HepG2 (cell line): ENCODE measurements at regions of chr11 and their contacts with region 1.

Region 1: DNA sequence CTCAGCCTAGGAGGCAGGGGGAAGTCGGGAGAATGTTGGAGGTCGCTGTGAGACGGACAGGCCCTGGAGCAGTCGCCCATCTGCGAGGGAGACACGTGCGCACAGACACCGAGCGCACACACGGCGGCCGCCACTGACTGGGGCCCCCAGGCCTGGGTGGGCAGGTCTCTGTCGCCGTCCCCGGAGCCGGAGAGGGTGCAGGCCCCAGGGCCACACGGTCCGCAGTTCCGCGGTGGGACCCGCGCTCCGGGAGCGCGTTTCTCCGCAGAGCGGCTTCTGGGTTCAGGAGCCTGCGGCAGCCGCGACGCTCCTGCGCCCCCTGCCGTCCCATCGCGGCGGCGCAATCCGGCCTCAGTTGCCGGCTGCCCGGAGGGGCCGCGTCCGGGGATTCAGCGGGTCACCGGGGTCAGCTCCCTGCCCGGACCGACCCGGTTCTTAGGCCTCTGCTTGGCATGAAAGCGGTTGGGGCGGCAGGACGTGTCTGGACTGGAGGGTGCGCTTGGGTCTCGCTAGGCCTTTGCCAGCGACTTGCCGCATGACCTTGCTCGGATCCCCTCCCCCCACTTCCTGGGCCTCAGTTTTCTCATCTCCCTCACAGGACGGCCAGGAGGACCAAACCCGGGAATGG is 31.2 kb downstream of the PDE2A start:
- DNase-seq: no peak
- ATAC-seq: peak; percentile 82
- H3K4me3 ChIP-seq: peak overlapping the region; percentile 13 to 59 (median 21); a peak in 3 of 6 replicates
- H3K27ac ChIP-seq: no peak overlapping the region
- H3K4me1 ChIP-seq: peaks cover 8% of the 10 kb centered on the region; the same call in 1 of the 2 replicates
- H3K27me3 ChIP-seq: peaks cover 14 to 48% of the 10 kb centered on the region in 2 experiments; a peak in 4 of 5 replicates
- CTCF ChIP-seq: peak; percentile 90
- EP300 ChIP-seq: no peak
- POLR2A ChIP-seq: no peak
- RAD21 ChIP-seq: peak; percentile 97

Region 2: GRCh38 chr11:72585762-72586311 is 57.2 kb before region 1 on chr11:
- CTCF ChIA-PET with region 1: interaction called, 29 read pairs
- POLR2A ChIA-PET with region 1: no interaction called
- in situ Hi-C with region 1: no loop called
- intact Hi-C with region 1: loop called (anchors 1 kb)
- DNase-seq: peak; percentile 44
- ATAC-seq: peak; percentile 60
- H3K4me3 ChIP-seq: no peak overlapping the region
- H3K27ac ChIP-seq: no peak overlapping the region
- H3K4me1 ChIP-seq: no peaks in the 10 kb centered on the region
- H3K27me3 ChIP-seq: peaks cover 12 to 56% of the 10 kb centered on the region in 2 experiments
- CTCF ChIP-seq: peak; percentile 95
- EP300 ChIP-seq: no peak
- POLR2A ChIP-seq: no peak
- RAD21 ChIP-seq: peak; percentile 71

Region 3: DNA sequence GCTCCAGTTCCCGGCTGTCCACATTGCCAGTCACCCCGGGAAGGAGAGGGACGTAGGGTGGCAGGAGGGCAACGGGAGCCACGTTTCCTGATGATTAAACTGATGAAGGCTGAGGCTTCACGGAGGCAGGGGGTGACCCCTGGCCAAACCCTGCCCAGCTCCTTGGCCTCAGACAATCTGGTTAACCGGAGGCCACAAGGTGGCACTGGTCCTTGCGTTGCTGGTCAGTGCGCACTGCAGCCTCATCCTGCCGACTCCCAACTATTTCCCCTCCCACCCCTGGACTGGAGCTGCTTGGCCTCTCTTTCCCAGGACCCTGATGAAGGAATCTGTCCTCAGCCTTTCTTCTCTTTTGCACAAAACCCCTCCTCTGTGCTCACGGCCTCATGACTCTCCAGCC is 44.1 kb before region 1 on chr11:
- CTCF ChIA-PET with region 1: interaction called, 14 read pairs
- POLR2A ChIA-PET with region 1: no interaction called
- in situ Hi-C with region 1: loop called (anchors 5 kb)
- intact Hi-C with region 1: loop called (anchors 2 kb)
- DNase-seq: peak; percentile 28
- ATAC-seq: peak; percentile 87
- H3K4me3 ChIP-seq: no peak overlapping the region
- H3K27ac ChIP-seq: no peak overlapping the region
- H3K4me1 ChIP-seq: no peaks in the 10 kb centered on the region
- H3K27me3 ChIP-seq: peaks cover 7 to 65% of the 10 kb centered on the region in 2 experiments; a peak in 4 of 5 replicates
- CTCF ChIP-seq: peak; percentile 75
- EP300 ChIP-seq: no peak
- POLR2A ChIP-seq: no peak
- RAD21 ChIP-seq: peak; percentile 54; the same call in 1 of the 2 replicates